Lower lobe of right lung (tissue), 2 donors: ENCODE measurements at regions of chr6 and their contacts with region 1.

Region 1: GRCh38 chr6:73608761-73609160 is 45.0 kb downstream of the SLC17A5 start:
- DNase-seq: no peak
- ATAC-seq: no peak
- H3K4me3 ChIP-seq: no peak overlapping the region
- H3K27ac ChIP-seq: no peak overlapping the region
- H3K4me1 ChIP-seq: peaks cover 7% of the 10 kb centered on the region
- H3K27me3 ChIP-seq: no peaks in the 10 kb centered on the region
- CTCF ChIP-seq: no peak

Region 2: GRCh38 chr6:73519926-73520687 is 88.7 kb before region 1 on chr6:
- intact Hi-C with region 1: loop called (anchors 5 kb)
- DNase-seq: peak; percentile 85
- ATAC-seq: peak; percentile 68
- H3K4me3 ChIP-seq: peak overlapping the region; percentile 85
- H3K27ac ChIP-seq: peak overlapping the region; percentile 100
- H3K4me1 ChIP-seq: peaks cover 65% of the 10 kb centered on the region
- H3K27me3 ChIP-seq: no peaks in the 10 kb centered on the region
- CTCF ChIP-seq: no peak